Caco-2 (cell line): ENCODE measurements at regions of chr3 and their contacts with region 1.

Region 1: DNA sequence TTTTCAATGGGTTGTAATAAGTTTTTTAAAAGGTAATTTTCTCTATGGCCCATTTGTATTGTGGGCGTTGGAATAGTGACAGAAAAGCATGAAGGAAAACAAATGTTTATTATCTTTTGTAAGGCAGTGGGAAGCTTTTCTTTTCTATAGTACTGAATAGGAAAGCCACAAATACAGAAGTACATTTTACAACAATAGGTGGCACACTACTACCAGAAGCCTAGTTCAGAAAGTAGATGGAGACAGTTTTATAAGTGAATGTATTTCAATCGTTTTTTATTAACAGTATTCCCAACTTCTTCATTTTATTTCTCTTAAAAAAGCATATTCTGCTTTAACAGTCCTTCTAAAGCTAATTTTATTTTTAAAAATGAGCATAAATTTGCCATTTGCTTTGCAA is 296.7 kb downstream of the PTPRG start:
- DNase-seq: no peak
- H3K4me3 ChIP-seq: no peak overlapping the region
- H3K4me3 Mint-ChIP-seq: no peak overlapping the region
- H3K27ac Mint-ChIP-seq: no peak overlapping the region
- H3K4me1 ChIP-seq: no peaks in the 10 kb centered on the region; the same call in 1 of the 2 replicates
- H3K4me1 Mint-ChIP-seq: no peaks in the 10 kb centered on the region
- H3K27me3 ChIP-seq: no peaks in the 10 kb centered on the region
- H3K27me3 Mint-ChIP-seq: no peaks in the 10 kb centered on the region
- CTCF ChIP-seq: peak in 1 of 2 experiments; percentile 13

Region 2: DNA sequence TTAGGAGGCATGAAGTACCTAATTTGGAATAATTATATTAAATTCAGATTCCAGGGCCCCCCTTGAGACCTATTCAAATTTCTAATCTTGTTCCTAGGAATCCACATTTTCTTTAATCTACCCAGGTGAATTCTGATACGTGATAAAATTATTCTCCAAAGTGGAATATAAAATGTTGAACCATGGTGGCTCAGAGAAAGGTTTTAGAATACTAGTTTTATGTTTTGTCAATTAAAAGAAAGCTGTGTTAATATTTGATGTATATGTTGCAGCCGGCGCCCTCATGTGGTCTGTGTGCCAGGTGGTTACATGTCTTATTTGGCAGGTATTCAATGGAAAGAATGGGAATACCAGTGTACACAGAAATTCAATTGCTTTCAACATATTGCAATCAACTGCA is 193.5 kb after region 1 on chr3:
- CTCF ChIA-PET with region 1: no interaction called
- POLR2A ChIA-PET with region 1: no interaction called
- intact Hi-C with region 1: loop called (anchors 5 kb)
- DNase-seq: peak in 1 of 2 experiments; percentile 18
- H3K4me3 ChIP-seq: no peak overlapping the region
- H3K4me3 Mint-ChIP-seq: no peak overlapping the region
- H3K27ac Mint-ChIP-seq: no peak overlapping the region
- H3K4me1 ChIP-seq: no peaks in the 10 kb centered on the region
- H3K4me1 Mint-ChIP-seq: peaks cover 6% of the 10 kb centered on the region
- H3K27me3 ChIP-seq: no peaks in the 10 kb centered on the region
- H3K27me3 Mint-ChIP-seq: no peaks in the 10 kb centered on the region
- CTCF ChIP-seq: peak; percentile 17 to 24